BJ (cell line): ENCODE measurements at regions of chr7 and their contacts with region 1.

Region 1: GRCh38 chr7:79282063-79282694 is 171.3 kb downstream of the MAGI2 start:
- DNase-seq: peak; percentile 66
- H3K4me3 ChIP-seq: no peak overlapping the region
- H3K27me3 ChIP-seq: no peaks in the 10 kb centered on the region
- CTCF ChIP-seq: peak; percentile 54

Region 2: GRCh38 chr7:78852951-78853350 is 429.2 kb before region 1 on chr7:
- CTCF ChIA-PET with region 1: no interaction called
- POLR2A ChIA-PET with region 1: interaction called, 12 read pairs
- DNase-seq: peak; percentile 87
- H3K4me3 ChIP-seq: no peak overlapping the region
- H3K27me3 ChIP-seq: no peaks in the 10 kb centered on the region
- CTCF ChIP-seq: no peak

Region 3: DNA sequence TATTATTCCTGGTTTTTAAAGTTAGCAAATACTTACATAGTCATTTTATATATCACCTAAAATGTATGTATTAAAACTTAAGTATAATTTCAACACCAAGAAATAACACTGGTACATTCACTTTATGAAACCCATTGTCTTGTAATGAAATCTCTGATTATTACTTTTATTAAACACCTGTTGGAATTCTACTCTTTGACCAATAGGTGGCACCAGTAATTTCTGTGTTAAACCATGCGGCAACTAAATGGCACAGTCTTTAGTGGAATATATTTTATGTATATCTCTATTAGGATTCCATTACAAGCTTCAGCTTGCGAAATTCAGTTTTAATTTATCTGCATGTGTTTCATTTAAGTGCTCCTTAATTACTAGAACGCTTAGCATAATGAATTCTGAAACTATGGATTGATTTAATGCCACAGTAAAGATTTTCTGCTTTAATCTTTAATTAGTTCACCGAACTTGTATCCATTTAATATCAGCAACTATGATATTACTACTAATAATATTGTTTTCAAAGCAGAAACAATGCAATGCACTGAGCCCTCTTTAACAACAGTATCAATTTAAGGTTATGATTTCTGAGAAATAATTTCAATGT is 10.0 kb before region 1 on chr7:
- CTCF ChIA-PET with region 1: interaction called, 11 read pairs
- POLR2A ChIA-PET with region 1: no interaction called
- DNase-seq: no peak
- H3K4me3 ChIP-seq: no peak overlapping the region
- H3K27me3 ChIP-seq: no peaks in the 10 kb centered on the region
- CTCF ChIP-seq: peak; percentile 61